HCT116 (cell line): ENCODE measurements at regions of chr15 and their contacts with region 1.

Region 1: DNA sequence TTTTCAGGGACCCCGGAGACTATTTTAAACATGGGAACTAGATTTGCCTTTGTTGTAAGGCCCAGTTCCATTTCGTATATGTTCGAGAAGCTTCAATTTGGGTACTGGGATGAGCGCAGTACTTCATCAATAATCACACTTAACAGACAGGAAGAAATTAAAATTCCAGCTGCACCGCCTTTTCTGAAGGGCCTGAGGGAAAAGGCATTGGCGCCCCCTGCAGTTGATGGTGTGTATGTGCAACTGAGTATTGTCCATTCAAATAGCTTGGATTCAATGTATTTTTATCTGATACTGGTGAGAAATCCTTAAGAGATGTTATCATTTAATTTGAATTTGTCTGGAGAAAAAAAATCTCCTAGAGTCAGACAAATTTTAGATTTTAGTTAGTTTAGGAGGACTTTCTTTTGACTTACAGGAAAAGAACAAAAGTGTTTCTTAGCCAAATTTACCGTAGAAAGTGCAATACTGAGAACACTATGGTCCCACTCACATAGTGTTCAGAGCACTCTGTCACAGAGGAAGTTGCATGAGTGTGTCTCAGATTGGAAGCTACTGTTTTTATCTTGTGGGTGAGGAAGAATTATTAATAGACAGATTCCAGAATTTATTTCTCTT is 5.4 kb upstream of the ALDH1A2 start:
- DNase-seq: peak; percentile 57
- ATAC-seq: peak; percentile 54; the same call in 1 of the 2 replicates
- H3K4me3 ChIP-seq: no peak overlapping the region
- H3K27ac ChIP-seq: no peak overlapping the region
- H3K4me1 ChIP-seq: peaks cover 0 to 7% of the 10 kb centered on the region in 2 experiments; a peak in 1 of 4 replicates
- H3K27me3 ChIP-seq: no peaks in the 10 kb centered on the region
- CTCF ChIP-seq: peak; percentile 81 to 97 (median 88)
- POLR2A ChIP-seq: no peak
- RAD21 ChIP-seq: peak; percentile 89

Region 2: GRCh38 chr15:57340682-57341259 is 730.1 kb before region 1 on chr15:
- CTCF ChIA-PET with region 1: interaction called, 4 read pairs
- POLR2A ChIA-PET with region 1: no interaction called
- RAD21 ChIA-PET with region 1: no interaction called
- intact Hi-C with region 1: loop called (anchors 10 kb)
- DNase-seq: peak; percentile 56
- ATAC-seq: peak; percentile 91
- H3K4me3 ChIP-seq: no peak overlapping the region
- H3K27ac ChIP-seq: no peak overlapping the region
- H3K4me1 ChIP-seq: no peaks in the 10 kb centered on the region
- H3K27me3 ChIP-seq: no peaks in the 10 kb centered on the region
- CTCF ChIP-seq: peak; percentile 75 to 92 (median 90)
- POLR2A ChIP-seq: no peak
- RAD21 ChIP-seq: peak; percentile 94

Region 3: DNA sequence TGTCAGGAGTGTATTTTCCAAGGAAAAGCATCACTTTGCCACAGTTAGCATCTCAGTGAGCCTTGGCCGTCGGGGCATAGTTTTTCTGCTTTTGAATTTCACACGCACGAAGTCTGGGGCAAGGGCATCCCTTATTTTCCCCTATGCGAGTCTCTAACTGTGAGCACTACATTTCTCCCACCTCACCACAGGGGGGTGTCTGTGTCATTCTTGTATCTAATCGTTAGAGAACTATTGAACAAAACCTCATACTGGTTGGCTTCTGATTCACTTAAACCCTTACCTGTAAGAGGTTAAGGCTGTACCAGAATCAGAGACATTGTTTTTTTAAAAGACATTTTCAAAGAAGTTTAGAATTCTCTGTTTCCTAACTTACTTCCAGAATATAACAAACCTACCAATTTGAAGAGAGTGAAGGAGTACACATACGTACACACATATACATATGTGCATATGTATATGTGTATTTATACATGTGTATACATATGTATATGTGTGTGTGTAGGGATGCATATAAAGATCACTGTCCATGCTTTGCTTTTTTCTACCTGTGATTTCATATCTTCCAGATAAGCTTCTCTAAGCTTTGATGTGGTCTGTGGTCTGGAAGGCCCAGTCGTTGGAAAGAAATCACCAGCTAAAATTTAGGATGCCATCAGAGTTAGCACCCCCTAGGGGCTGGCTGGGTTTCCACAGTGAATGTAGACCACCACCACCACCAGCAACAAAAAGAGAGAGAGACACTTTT is 429.8 kb before region 1 on chr15:
- CTCF ChIA-PET with region 1: no interaction called
- POLR2A ChIA-PET with region 1: no interaction called
- RAD21 ChIA-PET with region 1: no interaction called
- intact Hi-C with region 1: loop called (anchors 10 kb)
- DNase-seq: no peak
- ATAC-seq: peak; percentile 84
- H3K4me3 ChIP-seq: no peak overlapping the region
- H3K27ac ChIP-seq: no peak overlapping the region
- H3K4me1 ChIP-seq: no peaks in the 10 kb centered on the region
- H3K27me3 ChIP-seq: no peaks in the 10 kb centered on the region
- CTCF ChIP-seq: peak; percentile 18 to 58 (median 47); a peak in 4 of 6 replicates
- POLR2A ChIP-seq: no peak
- RAD21 ChIP-seq: peak; percentile 43; the same call in 1 of the 2 replicates

Region 4: DNA sequence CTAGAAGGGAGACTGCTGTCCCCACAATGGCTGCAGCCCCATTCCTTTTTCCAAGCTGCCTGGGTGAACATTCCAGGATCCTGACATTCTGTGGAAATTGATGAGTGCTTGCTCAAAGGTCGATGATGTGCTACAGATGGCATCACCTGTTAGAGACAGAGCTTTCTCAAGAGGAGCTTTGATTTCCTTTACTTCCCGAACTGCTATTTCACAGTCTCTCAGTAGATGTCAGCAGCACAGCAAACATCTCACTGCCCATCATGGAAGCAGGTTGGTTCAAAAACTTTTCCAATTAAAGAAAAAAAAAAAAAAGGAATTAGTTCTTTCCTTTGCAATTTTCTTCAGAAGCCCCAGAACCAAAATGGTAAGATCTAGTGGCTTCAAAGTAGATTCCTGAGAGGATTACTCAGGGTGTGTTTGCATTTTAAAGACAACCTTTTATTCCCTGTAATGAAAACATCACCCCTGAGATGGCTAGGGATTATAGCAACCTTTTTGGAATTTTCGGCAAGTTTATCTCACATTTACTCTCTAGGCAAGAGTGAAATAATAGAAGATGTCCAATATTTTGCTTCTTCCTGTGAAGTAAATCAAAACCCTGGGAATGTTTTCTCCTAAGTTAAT is 319.6 kb before region 1 on chr15:
- CTCF ChIA-PET with region 1: interaction called, 125 read pairs
- POLR2A ChIA-PET with region 1: interaction called, 4 read pairs
- RAD21 ChIA-PET with region 1: interaction called, 6 to 10 read pairs
- intact Hi-C with region 1: loop called (anchors 2 kb)
- DNase-seq: no peak
- ATAC-seq: peak; percentile 63
- H3K4me3 ChIP-seq: no peak overlapping the region
- H3K27ac ChIP-seq: no peak overlapping the region
- H3K4me1 ChIP-seq: no peaks in the 10 kb centered on the region
- H3K27me3 ChIP-seq: no peaks in the 10 kb centered on the region
- CTCF ChIP-seq: peak; percentile 51 to 62 (median 60); a peak in 5 of 6 replicates
- POLR2A ChIP-seq: no peak
- RAD21 ChIP-seq: peak; percentile 71

Region 5: DNA sequence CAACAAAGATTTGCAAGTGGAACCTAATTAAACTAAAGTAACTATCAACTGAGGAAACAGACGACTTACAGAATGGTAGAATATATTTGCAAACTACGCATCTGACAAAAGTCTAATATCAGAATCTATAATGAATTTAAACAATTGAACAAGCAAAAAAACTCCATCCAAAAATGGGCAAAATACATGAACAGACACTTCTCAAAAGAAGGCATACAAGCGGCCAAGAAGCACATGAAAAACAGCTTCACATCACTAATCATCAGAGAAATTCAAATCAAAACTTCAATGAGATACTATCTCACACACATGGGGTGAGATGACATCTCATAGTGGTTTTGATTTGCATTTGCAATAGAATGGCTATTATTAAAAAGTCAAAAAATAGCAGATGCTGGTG is 235.8 kb before region 1 on chr15:
- CTCF ChIA-PET with region 1: no interaction called
- POLR2A ChIA-PET with region 1: no interaction called
- RAD21 ChIA-PET with region 1: no interaction called
- intact Hi-C with region 1: no loop called
- DNase-seq: no peak
- ATAC-seq: no peak
- H3K4me3 ChIP-seq: no peak overlapping the region
- H3K27ac ChIP-seq: no peak overlapping the region
- H3K4me1 ChIP-seq: no peaks in the 10 kb centered on the region
- H3K27me3 ChIP-seq: no peaks in the 10 kb centered on the region
- CTCF ChIP-seq: no peak
- POLR2A ChIP-seq: no peak
- RAD21 ChIP-seq: no peak

Region 6: DNA sequence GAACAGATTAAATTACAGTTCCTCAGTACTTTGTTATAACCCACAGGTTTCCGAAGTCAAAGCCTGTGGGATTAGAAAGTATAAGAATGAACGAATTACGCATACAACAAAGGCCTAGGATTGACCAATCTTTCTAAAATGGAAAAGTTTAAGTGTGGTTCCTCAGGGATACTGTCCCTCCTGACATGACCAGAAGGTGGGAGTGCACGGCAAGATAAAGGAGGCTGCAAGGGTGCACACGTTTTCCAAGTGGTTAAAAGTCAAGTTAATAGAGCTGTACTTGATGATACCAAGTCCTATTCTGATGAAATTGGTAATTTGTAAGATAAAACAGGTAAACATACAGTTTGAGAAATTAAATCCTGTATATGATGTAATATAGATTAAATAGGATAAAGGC is 101.6 kb before region 1 on chr15:
- CTCF ChIA-PET with region 1: interaction called, 15 read pairs
- POLR2A ChIA-PET with region 1: no interaction called
- RAD21 ChIA-PET with region 1: no interaction called
- intact Hi-C with region 1: no loop called
- DNase-seq: no peak
- ATAC-seq: no peak; the same call in 1 of the 2 replicates
- H3K4me3 ChIP-seq: no peak overlapping the region
- H3K27ac ChIP-seq: no peak overlapping the region
- H3K4me1 ChIP-seq: no peaks in the 10 kb centered on the region
- H3K27me3 ChIP-seq: no peaks in the 10 kb centered on the region
- CTCF ChIP-seq: peak in 1 of 3 experiments; percentile 29; a peak in 1 of 6 replicates
- POLR2A ChIP-seq: no peak
- RAD21 ChIP-seq: peak; percentile 38; the same call in 1 of the 2 replicates

Region 7: DNA sequence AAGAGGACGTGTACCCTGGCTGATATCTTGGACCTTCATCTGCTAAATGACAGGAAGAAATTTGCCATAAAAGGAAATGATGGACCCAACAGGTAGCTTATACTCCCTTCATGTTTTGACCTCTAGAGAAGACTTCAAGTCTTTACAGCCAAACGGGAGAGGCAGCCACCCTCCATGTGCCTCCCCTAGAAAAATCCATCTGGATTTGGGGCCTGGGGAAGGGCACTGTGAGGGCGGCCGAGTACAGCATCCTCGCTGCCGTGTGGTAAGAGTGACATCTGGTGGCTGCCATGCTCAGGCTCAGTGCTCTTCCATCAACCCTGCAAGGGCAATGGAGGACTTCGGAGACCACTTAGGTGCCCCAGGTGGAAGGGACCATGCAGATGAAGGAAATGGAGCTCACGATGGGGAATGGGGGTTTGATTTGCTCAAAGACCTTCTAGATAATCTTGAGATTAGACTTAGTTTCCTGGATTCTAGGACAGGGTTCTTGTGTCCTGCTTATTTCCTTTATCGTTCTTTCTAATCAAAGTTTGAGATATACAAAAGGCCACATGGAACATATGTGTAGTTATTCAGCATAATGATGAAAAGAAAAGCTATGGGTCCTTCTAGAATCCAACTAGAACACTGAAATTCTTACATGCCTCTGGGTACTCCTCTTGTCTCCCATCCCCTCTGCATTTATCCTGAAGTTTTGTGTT is 111.7 kb after region 1 on chr15:
- CTCF ChIA-PET with region 1: interaction called, 24 read pairs
- POLR2A ChIA-PET with region 1: no interaction called
- RAD21 ChIA-PET with region 1: no interaction called
- intact Hi-C with region 1: no loop called
- DNase-seq: peak; percentile 48
- ATAC-seq: peak; percentile 100
- H3K4me3 ChIP-seq: no peak overlapping the region
- H3K27ac ChIP-seq: no peak overlapping the region
- H3K4me1 ChIP-seq: no peaks in the 10 kb centered on the region
- H3K27me3 ChIP-seq: peaks cover 5% of the 10 kb centered on the region; the same call in 1 of the 2 replicates
- CTCF ChIP-seq: peak; percentile 79 to 88 (median 87)
- POLR2A ChIP-seq: no peak
- RAD21 ChIP-seq: peak; percentile 93

Region 8: DNA sequence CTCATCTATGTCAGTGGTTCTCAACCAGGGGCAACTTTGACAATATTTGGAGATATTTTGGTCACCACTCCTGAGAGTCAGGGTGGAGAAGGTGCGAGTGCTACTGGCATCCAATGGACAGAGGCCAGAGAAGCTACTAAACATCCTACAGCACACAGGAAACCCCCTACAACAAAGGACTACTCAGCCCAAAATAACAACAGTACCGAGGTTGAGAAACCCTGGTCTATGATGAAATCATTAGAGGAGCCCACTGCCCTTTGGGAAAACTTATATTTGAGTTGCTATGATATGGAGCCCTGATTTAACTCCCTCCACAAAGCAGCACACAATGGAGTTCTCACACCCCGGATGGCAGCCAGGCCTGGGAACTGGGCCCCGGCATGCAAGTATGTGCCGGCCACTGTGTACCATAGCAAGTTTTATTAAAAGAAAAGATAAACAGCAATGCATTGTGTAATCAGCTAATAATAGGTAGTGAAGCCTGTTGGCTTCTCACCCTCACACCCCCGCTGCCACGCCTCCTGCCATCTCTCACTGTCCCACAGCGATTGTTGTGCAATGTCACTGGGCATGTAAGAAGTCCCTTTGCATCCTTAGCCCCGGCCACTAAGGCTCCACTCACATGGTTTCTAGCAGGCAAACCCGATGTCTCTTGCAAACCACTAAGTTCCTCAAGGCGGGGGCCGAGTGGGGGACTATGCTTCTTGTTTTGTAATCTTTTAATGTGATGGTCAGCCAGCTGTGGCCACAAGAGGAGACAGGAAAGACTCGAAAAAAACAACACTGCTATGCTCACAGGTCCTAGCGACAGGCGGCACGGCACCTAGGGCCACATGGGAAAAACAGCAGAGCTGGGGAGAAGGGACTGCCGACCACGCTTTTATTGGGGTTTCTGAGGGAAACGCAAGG is 177.2 kb after region 1 on chr15:
- CTCF ChIA-PET with region 1: no interaction called
- POLR2A ChIA-PET with region 1: no interaction called
- RAD21 ChIA-PET with region 1: no interaction called
- intact Hi-C with region 1: no loop called
- DNase-seq: no peak
- ATAC-seq: no peak
- H3K4me3 ChIP-seq: no peak overlapping the region
- H3K27ac ChIP-seq: no peak overlapping the region
- H3K4me1 ChIP-seq: no peaks in the 10 kb centered on the region
- H3K27me3 ChIP-seq: no peaks in the 10 kb centered on the region; the same call in 1 of the 2 replicates
- CTCF ChIP-seq: no peak
- POLR2A ChIP-seq: no peak
- RAD21 ChIP-seq: no peak